ENCODE measurements at regions of chr9 and their contacts with region 1.

Region 1: DNA sequence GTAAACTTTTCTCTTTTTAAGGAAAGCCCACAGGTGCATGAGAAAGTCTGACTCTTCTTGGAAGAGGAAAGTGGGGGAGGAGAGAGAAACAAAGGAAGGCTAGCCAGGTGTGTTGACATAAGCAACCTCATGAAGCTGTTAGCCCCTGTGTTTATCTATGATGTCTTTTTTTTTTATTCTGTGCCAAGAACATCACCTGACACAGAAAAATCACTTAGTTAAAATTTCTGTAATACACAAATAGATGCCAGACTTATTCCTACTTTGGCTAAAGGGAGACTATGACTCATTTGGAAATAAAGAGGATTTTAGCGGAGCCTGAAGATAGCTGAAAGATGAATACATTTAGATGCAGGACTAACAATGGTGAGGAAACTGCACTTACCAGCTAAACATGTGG is 58.3 kb downstream of the BAAT start:
- DNase-seq: peak; percentile 16
- ATAC-seq: no peak
- H3K4me3 ChIP-seq: no peak overlapping the region
- H3K27ac ChIP-seq: peak overlapping the region; percentile 97
- H3K4me1 ChIP-seq: peaks cover 74% of the 10 kb centered on the region
- H3K27me3 ChIP-seq: no peaks in the 10 kb centered on the region
- CTCF ChIP-seq: no peak
- EP300 ChIP-seq: peak in 1 of 2 experiments; percentile 66; a peak in 1 of 4 replicates
- POLR2A ChIP-seq: peak in 1 of 2 experiments; percentile 48; a peak in 1 of 4 replicates
- RAD21 ChIP-seq: no peak

Region 2: GRCh38 chr9:101366038-101366756 is 39.7 kb after region 1 on chr9:
- CTCF ChIA-PET with region 1: no interaction called
- POLR2A ChIA-PET with region 1: interaction called, 41 read pairs
- in situ Hi-C with region 1: no loop called
- intact Hi-C with region 1: loop called (anchors 1 kb)
- DNase-seq: peak; percentile 91
- ATAC-seq: peak; percentile 92
- H3K4me3 ChIP-seq: peak overlapping the region in 2 of 3 experiments; percentile 42 to 46; a peak in 3 of 6 replicates
- H3K27ac ChIP-seq: peak overlapping the region; percentile 74
- H3K4me1 ChIP-seq: peaks cover 45% of the 10 kb centered on the region
- H3K27me3 ChIP-seq: no peaks in the 10 kb centered on the region
- CTCF ChIP-seq: no peak
- EP300 ChIP-seq: peak in 1 of 2 experiments; percentile 44; a peak in 1 of 4 replicates
- POLR2A ChIP-seq: peak in 1 of 2 experiments; percentile 41; a peak in 1 of 4 replicates
- RAD21 ChIP-seq: no peak

Measured in HepG2 (cell line).